ENCODE measurements at regions of chr5 and their contacts with region 1.

Region 1: DNA sequence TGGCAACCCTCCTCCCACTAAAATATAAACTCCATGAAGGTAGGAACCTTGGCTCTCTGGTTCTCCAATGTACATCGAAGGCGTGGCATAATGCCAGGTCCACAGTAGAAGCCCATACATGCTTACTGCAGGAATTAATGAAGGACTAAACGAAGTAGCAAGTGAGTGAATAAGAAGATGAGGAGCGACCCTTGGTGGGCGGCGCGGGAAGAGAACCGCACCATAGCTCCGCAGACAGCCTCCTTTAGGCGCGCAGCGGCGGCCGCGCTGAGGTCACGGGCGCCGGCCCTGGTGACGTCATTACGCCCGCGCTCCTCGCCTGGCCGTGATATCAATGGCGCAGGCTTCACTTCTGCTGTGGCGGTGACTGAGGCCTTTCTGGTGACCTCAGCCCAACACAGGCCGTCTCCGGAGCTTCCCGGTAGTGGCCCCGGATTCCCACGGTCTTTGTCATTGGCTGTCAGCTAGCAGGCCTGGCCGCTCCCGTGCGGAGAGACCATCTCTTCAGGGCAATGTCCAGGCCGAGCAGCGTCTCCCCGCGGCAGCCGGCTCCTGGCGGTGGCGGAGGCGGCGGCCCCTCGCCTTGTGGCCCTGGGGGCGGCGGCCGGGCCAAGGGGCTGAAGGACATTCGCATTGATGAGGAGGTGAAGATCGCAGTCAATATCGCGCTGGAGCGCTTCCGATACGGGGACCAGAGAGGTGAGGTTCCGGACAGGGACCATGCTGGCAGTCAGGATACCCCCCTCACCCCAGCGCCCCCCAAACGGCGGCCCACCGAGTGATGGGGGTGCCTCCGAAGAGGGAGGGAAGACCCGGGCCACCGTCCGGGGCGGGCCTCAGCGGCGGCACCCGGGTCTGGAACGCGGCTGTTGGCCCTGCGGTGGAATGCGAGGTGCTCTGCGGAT is at the start of gene YTHDC2:
- DNase-seq: peak; percentile 94
- ATAC-seq: peak; percentile 98
- H3K4me3 Mint-ChIP-seq: peak within 1 kb of the TSS; percentile 86
- H3K27ac Mint-ChIP-seq: peak within 1 kb of the TSS; percentile 82
- H3K4me1 Mint-ChIP-seq: peaks cover 35% of the 10 kb centered on the region
- H3K27me3 Mint-ChIP-seq: peaks cover 6% of the 10 kb centered on the region
- total RNA-seq, gene YTHDC2: 19.0 to 28.7 TPM

Region 2: DNA sequence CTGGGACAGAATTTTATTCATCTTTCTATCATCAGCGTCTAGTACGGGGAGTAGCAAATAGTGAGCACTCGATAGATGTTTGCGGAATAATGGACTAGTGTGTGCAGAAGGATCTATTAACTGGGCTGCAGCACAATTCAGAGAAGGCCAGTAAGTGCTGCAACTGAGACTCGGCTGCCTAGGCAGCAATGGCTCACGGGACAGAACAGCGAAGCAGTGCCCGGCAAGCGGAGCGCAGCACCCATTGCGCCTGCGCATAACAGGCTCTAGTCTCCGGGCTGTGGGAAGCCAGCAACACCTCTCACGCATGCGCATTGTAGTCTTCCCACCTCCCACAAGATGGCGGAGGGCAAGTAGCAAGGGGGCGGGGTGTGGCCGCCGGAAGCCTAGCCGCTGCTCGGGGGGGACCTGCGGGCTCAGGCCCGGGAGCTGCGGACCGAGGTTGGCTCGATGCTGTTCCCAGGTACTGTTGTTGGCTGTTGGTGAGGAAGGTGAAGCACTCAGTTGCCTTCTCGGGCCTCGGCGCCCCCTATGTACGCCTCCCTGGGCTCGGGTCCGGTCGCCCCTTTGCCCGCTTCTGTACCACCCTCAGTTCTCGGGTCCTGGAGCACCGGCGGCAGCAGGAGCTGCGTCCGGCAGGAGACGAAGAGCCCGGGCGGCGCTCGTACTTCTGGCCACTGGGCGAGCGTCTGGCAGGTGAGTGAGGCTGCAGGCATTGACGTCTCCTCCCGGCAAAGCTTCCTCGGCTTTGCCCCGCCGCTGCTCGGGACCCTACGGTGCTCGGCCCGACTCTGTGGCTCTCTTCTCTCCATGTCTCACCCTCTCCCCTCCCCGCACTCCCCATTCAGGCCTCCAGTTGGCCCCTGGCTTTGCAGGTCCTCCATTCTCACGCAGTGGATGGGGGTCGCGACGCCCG is 806.2 kb before region 1 on chr5:
- CTCF ChIA-PET with region 1: no interaction called
- POLR2A ChIA-PET with region 1: no interaction called
- intact Hi-C with region 1: loop called in 1 of 2 experiments (anchors 5 kb)
- DNase-seq: peak; percentile 98
- ATAC-seq: peak; percentile 97
- H3K4me3 Mint-ChIP-seq: peak overlapping the region; percentile 83
- H3K27ac Mint-ChIP-seq: peak overlapping the region; percentile 90
- H3K4me1 Mint-ChIP-seq: peaks cover 54% of the 10 kb centered on the region
- H3K27me3 Mint-ChIP-seq: no peaks in the 10 kb centered on the region

Region 3: GRCh38 chr5:112976432-112977309 is 537.0 kb before region 1 on chr5 and contains the start of gene DCP2:
- CTCF ChIA-PET with region 1: interaction called, 3 read pairs
- POLR2A ChIA-PET with region 1: interaction called, 5 read pairs
- intact Hi-C with region 1: loop called (anchors 1 to 2 kb)
- DNase-seq: peak; percentile 96
- ATAC-seq: peak; percentile 94
- H3K4me3 Mint-ChIP-seq: peak within 1 kb of the TSS; percentile 99
- H3K27ac Mint-ChIP-seq: peak within 1 kb of the TSS; percentile 98
- H3K4me1 Mint-ChIP-seq: peaks cover 39% of the 10 kb centered on the region
- H3K27me3 Mint-ChIP-seq: no peaks in the 10 kb centered on the region
- total RNA-seq, gene DCP2: 94.0 to 101 TPM

Region 4: DNA sequence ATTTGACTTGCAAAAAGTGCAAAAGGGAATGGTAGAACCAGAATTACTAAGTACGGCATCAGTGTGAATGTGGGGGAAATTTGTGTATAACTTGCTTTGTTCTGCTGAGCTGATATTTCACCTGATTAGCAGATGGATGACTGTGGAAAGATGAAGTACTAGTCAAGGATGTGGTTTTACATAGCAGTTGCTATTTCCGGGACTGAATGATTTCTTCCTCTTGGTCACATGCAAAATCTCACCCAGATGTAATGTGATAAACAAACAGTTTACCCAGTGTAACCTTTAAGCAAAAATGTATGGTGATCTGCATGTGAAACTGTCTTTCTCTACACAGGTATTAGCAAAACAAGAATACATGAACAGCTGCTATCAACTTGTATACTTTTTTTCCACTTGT is 491.0 kb before region 1 on chr5:
- CTCF ChIA-PET with region 1: no interaction called
- POLR2A ChIA-PET with region 1: no interaction called
- intact Hi-C with region 1: loop called in 1 of 2 experiments (anchors 5 kb)
- DNase-seq: no peak
- ATAC-seq: peak; percentile 57
- H3K4me3 Mint-ChIP-seq: peak overlapping the region; percentile 10
- H3K27ac Mint-ChIP-seq: peak overlapping the region; percentile 38
- H3K4me1 Mint-ChIP-seq: peaks cover 64% of the 10 kb centered on the region
- H3K27me3 Mint-ChIP-seq: no peaks in the 10 kb centered on the region

Region 5: DNA sequence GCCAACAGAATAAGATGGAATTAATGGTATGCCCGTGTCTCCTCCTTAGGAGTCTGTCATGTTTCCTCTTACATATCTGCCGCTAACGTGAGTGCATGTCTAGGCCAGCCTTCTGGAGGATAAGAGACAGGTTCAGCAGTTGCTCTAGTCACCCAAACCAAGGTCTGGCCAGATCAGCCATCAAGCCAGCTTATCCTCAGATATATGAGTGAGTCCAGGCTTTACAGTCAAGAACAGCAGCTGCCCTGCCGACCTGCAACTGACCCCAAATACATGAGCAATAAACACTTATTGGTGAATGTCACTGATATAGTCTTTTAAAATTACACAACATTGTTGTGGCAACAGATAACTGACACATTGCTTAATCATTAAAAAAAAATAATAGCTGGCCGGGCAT is 202.3 kb before region 1 on chr5:
- CTCF ChIA-PET with region 1: no interaction called
- POLR2A ChIA-PET with region 1: no interaction called
- intact Hi-C with region 1: no loop called
- DNase-seq: no peak
- ATAC-seq: no peak
- H3K4me3 Mint-ChIP-seq: no peak overlapping the region
- H3K27ac Mint-ChIP-seq: no peak overlapping the region
- H3K4me1 Mint-ChIP-seq: no peaks in the 10 kb centered on the region
- H3K27me3 Mint-ChIP-seq: peaks cover 4% of the 10 kb centered on the region

Region 6: DNA sequence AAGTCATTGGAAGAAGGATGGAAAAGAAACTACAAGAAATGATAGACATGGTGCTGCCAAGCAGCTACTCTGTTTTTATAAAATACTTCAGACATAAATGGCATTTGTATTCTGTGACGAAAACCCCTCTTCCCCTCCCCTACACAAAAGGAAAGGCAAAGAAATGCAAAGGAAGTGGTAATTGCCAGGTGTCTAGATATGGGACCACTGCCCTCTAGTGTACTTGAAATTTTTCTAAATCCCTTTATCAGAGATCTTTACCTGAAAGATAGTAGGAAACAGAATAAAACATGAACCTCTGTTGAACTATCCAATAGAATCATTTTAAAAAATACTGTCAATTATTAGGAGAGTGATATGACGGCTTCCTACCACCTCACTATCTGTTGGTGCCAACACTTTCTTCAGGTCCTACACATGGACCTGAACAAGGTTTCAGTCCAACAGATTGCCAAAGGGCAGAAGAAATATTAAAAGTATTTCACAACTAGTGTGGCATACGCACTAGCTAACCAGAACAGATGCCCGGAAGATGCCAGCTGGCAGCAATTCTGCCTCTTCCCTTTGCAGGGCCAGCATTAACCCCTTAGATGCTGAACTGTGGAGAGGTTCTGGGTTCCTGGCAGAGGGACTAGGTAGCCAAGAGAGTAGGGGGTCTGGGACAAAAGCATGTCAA is 183.0 kb before region 1 on chr5:
- CTCF ChIA-PET with region 1: no interaction called
- POLR2A ChIA-PET with region 1: no interaction called
- intact Hi-C with region 1: loop called (anchors 1 to 2 kb)
- DNase-seq: peak; percentile 13
- ATAC-seq: peak; percentile 78
- H3K4me3 Mint-ChIP-seq: no peak overlapping the region
- H3K27ac Mint-ChIP-seq: peak overlapping the region; percentile 17
- H3K4me1 Mint-ChIP-seq: peaks cover 11% of the 10 kb centered on the region
- H3K27me3 Mint-ChIP-seq: no peaks in the 10 kb centered on the region

Region 7: GRCh38 chr5:113487781-113488644 is 25.6 kb before region 1 on chr5 and contains the start of gene MCC:
- CTCF ChIA-PET with region 1: interaction called, 6 read pairs
- POLR2A ChIA-PET with region 1: interaction called, 5 read pairs
- intact Hi-C with region 1: loop called in 1 of 2 experiments (anchors 2 kb)
- DNase-seq: peak; percentile 60
- ATAC-seq: peak; percentile 68
- H3K4me3 Mint-ChIP-seq: peak within 1 kb of the TSS; percentile 69
- H3K27ac Mint-ChIP-seq: peak within 1 kb of the TSS; percentile 4
- H3K4me1 Mint-ChIP-seq: peaks cover 20% of the 10 kb centered on the region
- H3K27me3 Mint-ChIP-seq: peaks cover 68% of the 10 kb centered on the region
- total RNA-seq, gene MCC: 1.9 to 2.4 TPM

Region 8: DNA sequence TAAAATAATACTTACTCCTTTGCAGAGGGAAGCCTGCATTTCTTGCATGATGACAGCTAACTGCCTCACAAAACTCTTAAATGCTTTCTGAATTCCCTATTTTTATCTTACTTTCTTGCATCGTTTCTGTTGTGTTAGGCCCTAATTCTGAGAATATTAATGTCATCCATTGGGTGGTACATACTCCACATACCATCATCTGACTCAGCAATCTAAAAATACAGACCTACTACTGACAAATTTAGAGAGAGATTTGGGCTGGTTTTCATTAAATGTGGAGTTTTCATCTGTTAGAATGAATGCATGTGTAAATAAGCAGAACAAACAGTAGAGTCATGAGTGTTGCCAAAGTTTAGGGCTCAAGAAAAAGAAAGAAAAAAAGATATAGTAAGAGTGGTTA is 821.8 kb after region 1 on chr5:
- CTCF ChIA-PET with region 1: no interaction called
- POLR2A ChIA-PET with region 1: no interaction called
- intact Hi-C with region 1: no loop called
- DNase-seq: no peak
- ATAC-seq: no peak
- H3K4me3 Mint-ChIP-seq: no peak overlapping the region
- H3K27ac Mint-ChIP-seq: no peak overlapping the region
- H3K4me1 Mint-ChIP-seq: no peaks in the 10 kb centered on the region
- H3K27me3 Mint-ChIP-seq: peaks cover 2% of the 10 kb centered on the region

Measured in activated CD4-positive, alpha-beta T cell treated with anti-CD3 and anti-CD28 coated beads for 36 hours (primary cell).